ENCODE measurements at regions of chr18 and their contacts with region 1.

Region 1: GRCh38 chr18:45566025-45566740 is 49.1 kb upstream of the SLC14A2 start:
- DNase-seq: no peak
- H3K4me3 ChIP-seq: no peak overlapping the region
- H3K4me3 Mint-ChIP-seq: no peak overlapping the region
- H3K27ac Mint-ChIP-seq: no peak overlapping the region
- H3K4me1 ChIP-seq: 0 out of 2 replicates have a peak, but pooled peaks cover 5% of the 10 kb centered on the region
- H3K4me1 Mint-ChIP-seq: peaks cover 17% of the 10 kb centered on the region
- H3K27me3 ChIP-seq: no peaks in the 10 kb centered on the region
- H3K27me3 Mint-ChIP-seq: no peaks in the 10 kb centered on the region
- CTCF ChIP-seq: no peak

Region 2: GRCh38 chr18:45441110-45441842 is 124.9 kb before region 1 on chr18:
- CTCF ChIA-PET with region 1: no interaction called
- POLR2A ChIA-PET with region 1: no interaction called
- intact Hi-C with region 1: loop called (anchors 10 kb)
- DNase-seq: no peak
- H3K4me3 ChIP-seq: no peak overlapping the region
- H3K4me3 Mint-ChIP-seq: no peak overlapping the region
- H3K27ac Mint-ChIP-seq: no peak overlapping the region
- H3K4me1 ChIP-seq: no peaks in the 10 kb centered on the region
- H3K4me1 Mint-ChIP-seq: no peaks in the 10 kb centered on the region
- H3K27me3 ChIP-seq: no peaks in the 10 kb centered on the region
- H3K27me3 Mint-ChIP-seq: no peaks in the 10 kb centered on the region
- CTCF ChIP-seq: peak; percentile 7 to 12

Region 3: DNA sequence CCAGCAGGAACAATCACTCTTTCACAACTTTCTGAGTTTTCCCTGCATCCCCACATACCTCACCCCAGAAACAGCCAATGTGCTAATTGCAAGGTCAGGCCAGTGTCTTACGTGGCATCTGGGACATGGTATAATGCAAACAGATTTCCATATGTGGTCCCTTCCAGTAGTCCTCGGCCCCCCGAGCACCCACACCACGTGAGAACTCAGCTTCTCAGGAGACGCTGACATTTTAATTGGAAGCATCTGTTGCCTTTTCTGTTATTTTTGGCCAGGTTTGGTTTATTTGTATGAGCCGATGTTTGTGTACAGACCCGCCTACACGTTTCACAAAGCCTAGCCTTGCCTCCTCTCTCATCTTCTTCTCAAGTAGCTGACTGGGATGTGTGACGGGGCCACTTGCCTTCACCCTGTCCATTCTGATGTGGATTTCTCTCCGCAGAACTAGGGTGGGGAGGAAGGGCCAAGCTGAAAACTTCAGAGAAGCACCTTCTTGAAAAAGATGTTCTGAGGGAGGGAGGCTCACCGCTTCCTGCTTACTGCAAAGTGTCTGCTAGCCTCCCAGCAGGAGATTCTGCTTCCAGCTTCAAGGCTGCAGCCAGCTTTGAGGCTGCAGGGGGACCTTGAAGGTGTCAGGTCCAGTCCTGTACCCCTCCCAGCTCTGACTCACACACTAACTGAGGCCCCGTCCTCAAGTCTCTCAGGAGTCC is 60.5 kb before region 1 on chr18:
- CTCF ChIA-PET with region 1: no interaction called
- POLR2A ChIA-PET with region 1: no interaction called
- intact Hi-C with region 1: no loop called
- DNase-seq: no peak
- H3K4me3 ChIP-seq: no peak overlapping the region
- H3K4me3 Mint-ChIP-seq: no peak overlapping the region
- H3K27ac Mint-ChIP-seq: no peak overlapping the region
- H3K4me1 ChIP-seq: no peaks in the 10 kb centered on the region
- H3K4me1 Mint-ChIP-seq: no peaks in the 10 kb centered on the region
- H3K27me3 ChIP-seq: no peaks in the 10 kb centered on the region
- H3K27me3 Mint-ChIP-seq: no peaks in the 10 kb centered on the region
- CTCF ChIP-seq: no peak

Region 4: DNA sequence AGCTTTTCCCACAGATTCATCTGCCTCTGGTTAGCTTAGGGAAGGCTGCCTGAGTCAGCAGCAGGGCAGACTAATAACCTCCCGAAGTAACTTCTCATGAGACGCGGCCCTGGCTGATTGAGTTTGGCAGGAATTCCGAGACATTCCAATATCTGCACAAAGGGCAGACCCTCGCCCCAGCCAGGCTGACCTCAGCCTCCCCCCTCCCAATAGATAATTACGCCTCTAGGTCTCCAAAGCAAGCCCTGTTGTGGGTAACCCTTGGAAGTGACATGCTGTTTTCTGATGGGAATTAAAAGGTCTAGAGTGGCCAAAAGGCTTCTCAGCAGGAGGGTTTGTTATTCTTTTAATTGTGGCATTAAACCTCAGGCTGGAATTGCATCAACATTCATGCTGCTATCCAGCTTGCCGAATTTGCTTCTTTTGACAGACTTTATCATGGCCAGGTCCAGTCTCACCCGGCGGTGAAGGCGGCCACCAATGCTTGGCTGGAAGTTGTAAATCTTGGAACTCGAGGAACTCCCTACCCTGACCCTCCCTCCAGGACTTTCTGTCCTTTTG is 48.9 kb before region 1 on chr18:
- CTCF ChIA-PET with region 1: no interaction called
- POLR2A ChIA-PET with region 1: no interaction called
- intact Hi-C with region 1: no loop called
- DNase-seq: no peak
- H3K4me3 ChIP-seq: no peak overlapping the region
- H3K4me3 Mint-ChIP-seq: no peak overlapping the region
- H3K27ac Mint-ChIP-seq: no peak overlapping the region
- H3K4me1 ChIP-seq: no peaks in the 10 kb centered on the region
- H3K4me1 Mint-ChIP-seq: no peaks in the 10 kb centered on the region
- H3K27me3 ChIP-seq: no peaks in the 10 kb centered on the region
- H3K27me3 Mint-ChIP-seq: no peaks in the 10 kb centered on the region
- CTCF ChIP-seq: no peak

Region 5: DNA sequence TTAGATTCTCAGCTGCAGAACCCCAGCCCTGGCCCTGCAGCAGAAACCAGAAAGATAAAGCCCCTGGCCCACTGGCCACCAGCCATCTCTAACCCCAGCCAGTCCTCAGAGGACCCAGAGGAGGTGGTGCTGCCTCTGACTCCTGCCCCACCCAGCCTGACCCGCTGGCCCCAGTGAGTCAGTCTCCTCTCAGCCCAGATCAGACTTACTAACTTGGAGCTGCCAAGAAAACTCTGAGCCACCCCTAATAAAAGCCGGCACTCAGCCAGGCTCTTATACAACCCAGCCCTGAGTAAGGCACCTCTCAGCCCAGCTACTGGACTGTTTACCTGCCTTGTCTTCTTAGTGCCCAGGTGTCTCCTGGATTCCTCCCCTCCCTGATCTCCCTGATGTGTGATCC is 51.1 kb after region 1 on chr18:
- CTCF ChIA-PET with region 1: no interaction called
- POLR2A ChIA-PET with region 1: no interaction called
- intact Hi-C with region 1: no loop called
- DNase-seq: no peak
- H3K4me3 ChIP-seq: no peak overlapping the region
- H3K4me3 Mint-ChIP-seq: no peak overlapping the region
- H3K27ac Mint-ChIP-seq: no peak overlapping the region
- H3K4me1 ChIP-seq: no peaks in the 10 kb centered on the region
- H3K4me1 Mint-ChIP-seq: no peaks in the 10 kb centered on the region
- H3K27me3 ChIP-seq: no peaks in the 10 kb centered on the region
- H3K27me3 Mint-ChIP-seq: no peaks in the 10 kb centered on the region
- CTCF ChIP-seq: no peak

Measured in Caco-2 (cell line).